ENCODE measurements at regions of chr16 and their contacts with region 1.

Region 1: GRCh38 chr16:88737298-88738150 is 31.2 kb downstream of the CTU2 start:
- DNase-seq: peak; percentile 50
- H3K4me3 ChIP-seq: no peak overlapping the region
- H3K27ac ChIP-seq: no peak overlapping the region
- H3K4me1 ChIP-seq: no peaks in the 10 kb centered on the region
- H3K27me3 ChIP-seq: no peaks in the 10 kb centered on the region
- CTCF ChIP-seq: peak; percentile 97 to 99
- POLR2A ChIP-seq: no peak

Region 2: GRCh38 chr16:88700636-88701482 is 36.7 kb before region 1 on chr16:
- CTCF ChIA-PET with region 1: interaction called, 25 read pairs
- POLR2A ChIA-PET with region 1: no interaction called
- dilution Hi-C with region 1: no loop called
- intact Hi-C with region 1: no loop called
- DNase-seq: peak; percentile 95
- H3K4me3 ChIP-seq: no peak overlapping the region
- H3K27ac ChIP-seq: peak overlapping the region; percentile 69
- H3K4me1 ChIP-seq: peaks cover 52% of the 10 kb centered on the region
- H3K27me3 ChIP-seq: no peaks in the 10 kb centered on the region
- CTCF ChIP-seq: no peak
- POLR2A ChIP-seq: no peak

Region 3: DNA sequence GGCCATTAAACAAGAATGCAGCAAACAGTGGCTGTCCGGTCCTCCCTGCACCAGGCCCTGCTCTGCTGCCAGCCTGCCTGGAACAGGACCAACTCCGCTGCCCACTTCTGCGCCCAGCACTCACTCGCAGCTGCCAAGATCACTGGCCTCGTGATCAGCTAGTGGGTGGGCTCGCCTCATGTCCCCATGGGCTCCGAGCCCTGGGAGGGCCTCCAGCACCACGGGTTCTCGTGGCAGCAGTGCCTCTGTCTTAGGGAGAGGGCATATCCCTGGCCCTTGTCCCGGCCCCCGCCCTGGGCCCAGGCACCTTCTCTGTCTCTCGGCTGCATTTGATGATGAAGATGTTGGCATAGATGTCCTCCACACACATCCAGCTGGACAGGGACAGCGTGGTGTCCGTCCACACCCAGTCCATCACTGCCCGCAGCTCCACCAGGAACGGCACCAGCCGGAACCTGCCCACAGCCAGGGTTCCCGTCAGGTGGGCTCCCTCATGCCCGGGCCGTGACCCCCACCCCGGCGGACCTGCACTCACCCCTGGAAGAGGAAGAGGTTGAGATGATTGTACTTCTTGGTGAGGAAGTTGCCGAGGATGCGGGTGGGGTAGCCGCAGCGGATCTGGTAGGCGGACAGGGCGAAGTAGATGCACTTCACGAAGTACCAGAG is 18.1 kb before region 1 on chr16:
- CTCF ChIA-PET with region 1: interaction called, 19 read pairs
- POLR2A ChIA-PET with region 1: no interaction called
- dilution Hi-C with region 1: no loop called
- intact Hi-C with region 1: no loop called
- DNase-seq: no peak
- H3K4me3 ChIP-seq: no peak overlapping the region
- H3K27ac ChIP-seq: no peak overlapping the region
- H3K4me1 ChIP-seq: no peaks in the 10 kb centered on the region
- H3K27me3 ChIP-seq: no peaks in the 10 kb centered on the region
- CTCF ChIP-seq: no peak
- POLR2A ChIP-seq: no peak

Region 4: DNA sequence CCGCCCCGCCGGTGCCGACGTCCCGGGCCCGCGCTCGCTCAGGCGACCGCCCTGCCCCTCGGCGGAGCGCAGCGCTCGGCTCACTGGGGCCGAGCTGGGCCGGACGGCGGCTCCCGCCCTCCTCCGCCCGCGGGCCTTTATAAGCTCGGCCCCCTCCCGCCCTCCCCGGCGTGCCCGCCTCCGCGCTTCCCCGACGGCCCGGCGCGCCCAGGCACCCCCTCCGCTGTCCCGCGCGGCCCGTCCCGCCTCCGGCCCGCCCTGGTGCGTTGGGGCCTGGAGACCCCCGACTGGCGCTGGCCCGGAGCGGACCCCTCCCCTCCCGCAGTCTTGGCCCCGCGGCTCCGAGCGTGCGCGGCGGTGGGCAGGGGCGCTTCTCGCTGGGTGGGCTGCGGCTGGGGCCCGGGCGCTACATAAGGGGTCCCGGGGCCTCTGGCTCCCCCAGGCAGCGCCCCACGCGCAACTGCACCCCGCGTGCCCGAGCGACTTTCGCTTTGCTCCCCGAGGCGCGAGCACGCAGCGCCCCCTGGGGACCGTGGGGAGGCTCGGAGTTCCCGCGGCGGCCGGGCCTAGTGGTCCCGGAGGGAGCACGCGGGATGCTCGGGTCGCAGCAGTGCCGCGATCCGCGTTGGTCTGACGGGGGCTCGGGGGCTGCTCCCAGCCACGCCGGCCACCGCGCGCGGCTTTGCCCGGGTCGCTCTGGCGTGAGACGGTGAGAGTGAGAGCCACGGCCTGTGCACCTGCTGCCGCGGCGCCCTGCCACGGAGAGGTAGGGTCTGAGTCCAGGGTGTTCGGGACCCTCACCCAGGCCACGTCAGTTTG is 47.8 kb after region 1 on chr16 and contains the start of gene PIEZO1:
- CTCF ChIA-PET with region 1: interaction called, 165 read pairs
- POLR2A ChIA-PET with region 1: interaction called, 6 read pairs
- dilution Hi-C with region 1: no loop called
- intact Hi-C with region 1: loop called (anchors 1 kb)
- DNase-seq: peak; percentile 53
- H3K4me3 ChIP-seq: peak within 1 kb of the TSS; percentile 66 to 93 (median 66)
- H3K27ac ChIP-seq: peak within 1 kb of the TSS; percentile 86
- H3K4me1 ChIP-seq: peaks cover 28% of the 10 kb centered on the region
- H3K27me3 ChIP-seq: no peaks in the 10 kb centered on the region
- CTCF ChIP-seq: peak; percentile 89 to 92
- POLR2A ChIP-seq: peak; percentile 86
- total RNA-seq, gene PIEZO1: 306 and 322 TPM in 2 replicates

Region 5: DNA sequence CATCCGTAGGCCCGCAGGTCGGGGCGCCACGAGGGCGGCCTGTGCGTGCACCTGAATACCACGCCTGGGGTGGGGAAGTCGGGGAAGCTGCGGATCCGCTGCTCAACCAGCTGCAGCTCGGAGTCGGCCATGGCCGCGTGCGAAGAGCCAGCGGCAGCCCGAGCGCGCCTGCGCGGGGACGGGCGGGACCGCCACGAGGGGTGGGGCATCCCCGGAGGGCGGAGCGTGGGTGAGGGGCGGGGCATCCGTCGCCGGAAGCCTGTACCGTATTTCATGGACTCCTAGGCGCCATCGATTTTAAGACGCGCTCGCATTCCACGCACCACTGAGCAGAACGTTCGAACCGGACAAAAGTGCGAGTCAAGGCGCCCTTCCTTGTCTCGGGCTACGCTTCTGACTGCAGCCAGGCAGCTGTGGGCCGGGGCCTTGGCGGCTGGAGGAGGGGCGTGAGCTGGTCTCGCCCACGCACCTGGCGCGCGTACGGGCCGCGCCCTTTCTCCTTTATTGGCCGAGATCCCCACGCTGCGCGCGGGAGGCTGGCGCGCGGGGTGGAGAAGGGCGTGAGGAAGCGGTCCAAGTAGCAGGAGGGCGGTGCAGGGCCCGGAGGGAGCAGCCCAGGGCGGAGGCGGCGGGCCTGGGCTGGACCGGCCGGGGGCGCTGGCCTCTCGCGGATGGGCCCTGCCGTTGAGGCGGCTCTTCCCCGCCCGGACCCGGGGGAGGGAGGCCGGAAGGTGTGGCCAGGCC is 74.4 kb after region 1 on chr16 and contains the start of gene APRT:
- CTCF ChIA-PET with region 1: interaction called, 26 read pairs
- POLR2A ChIA-PET with region 1: no interaction called
- dilution Hi-C with region 1: no loop called
- intact Hi-C with region 1: no loop called
- DNase-seq: peak; percentile 94
- H3K4me3 ChIP-seq: peak within 1 kb of the TSS; percentile 42 to 54 (median 52)
- H3K27ac ChIP-seq: peak within 1 kb of the TSS; percentile 49
- H3K4me1 ChIP-seq: peaks cover 17% of the 10 kb centered on the region
- H3K27me3 ChIP-seq: no peaks in the 10 kb centered on the region
- CTCF ChIP-seq: peak; percentile 16 to 37
- POLR2A ChIP-seq: peak; percentile 97
- total RNA-seq, gene APRT: 148 and 152 TPM in 2 replicates

Region 6: GRCh38 chr16:89217388-89218191 is 480.1 kb after region 1 on chr16 and contains the start of gene ZNF778:
- CTCF ChIA-PET with region 1: interaction called, 10 read pairs
- POLR2A ChIA-PET with region 1: no interaction called
- dilution Hi-C with region 1: no loop called
- intact Hi-C with region 1: no loop called
- DNase-seq: peak; percentile 88
- H3K4me3 ChIP-seq: peak within 1 kb of the TSS; percentile 66 to 90 (median 85)
- H3K27ac ChIP-seq: peak within 1 kb of the TSS; percentile 57
- H3K4me1 ChIP-seq: peaks cover 10% of the 10 kb centered on the region
- H3K27me3 ChIP-seq: no peaks in the 10 kb centered on the region
- CTCF ChIP-seq: no peak
- POLR2A ChIP-seq: peak; percentile 94
- total RNA-seq, gene ZNF778: 7.1 and 10.9 TPM in 2 replicates

Measured in endothelial cell of umbilical vein (primary cell).